Activated T-helper 1 cell treated with anti-CD3 and anti-CD28 coated beads, Interleukin-12 subunit alpha, Interleukin-12 subunit beta, Interleukin-2, Interleukin-4 antibody, amounts not matched to agents 30 ng/mL and 10 ng/mL and 1 ng/mL, durations not matched to agents 14 hours and 24 hours and 36 hours (primary cell): ENCODE measurements at regions of chr14 and their contacts with region 1.

Region 1: DNA sequence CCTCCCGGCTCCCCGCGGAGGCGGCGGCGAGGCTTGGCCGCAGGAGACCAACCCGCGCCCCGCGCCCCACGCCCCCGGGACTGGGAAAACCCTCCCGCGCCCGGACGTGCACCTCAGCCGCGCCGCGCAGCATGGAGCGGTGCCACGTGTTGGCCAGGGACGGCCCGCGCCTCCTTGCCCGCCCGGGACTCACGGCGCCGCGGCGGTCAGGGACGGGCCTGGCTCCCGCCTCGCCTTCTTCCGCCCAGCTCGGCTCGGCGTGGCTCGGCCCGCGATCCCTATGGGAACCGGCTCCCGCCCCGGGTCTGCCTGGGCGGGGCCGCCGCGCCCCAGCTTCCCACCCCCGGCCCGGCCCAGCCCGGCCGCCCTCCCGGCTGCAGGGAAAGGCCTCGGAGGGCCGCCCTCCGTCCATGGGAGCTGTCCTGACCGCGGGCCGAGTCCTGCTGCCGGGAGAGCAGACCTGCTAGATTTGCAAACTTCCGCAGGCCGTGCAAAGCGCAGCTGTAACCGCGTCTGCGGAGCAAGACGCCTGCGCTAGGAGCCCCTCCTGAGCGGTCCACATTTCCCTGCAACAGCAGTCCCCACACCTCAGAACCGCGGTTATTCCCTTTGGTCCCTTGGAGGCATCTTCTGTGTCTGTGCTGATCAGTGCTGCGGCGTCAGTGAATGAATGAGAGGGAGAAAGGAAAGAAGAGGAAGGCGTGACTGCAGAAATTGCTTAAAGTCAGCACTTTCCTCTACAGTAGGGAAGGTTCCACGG is at the start of gene CDKL1:
- DNase-seq: peak; percentile 22
- H3K4me3 Mint-ChIP-seq: peak within 1 kb of the TSS; percentile 85
- H3K27ac Mint-ChIP-seq: peak within 1 kb of the TSS; percentile 79
- H3K4me1 Mint-ChIP-seq: peaks cover 14% of the 10 kb centered on the region
- H3K27me3 Mint-ChIP-seq: peaks cover 25% of the 10 kb centered on the region
- total RNA-seq, gene CDKL1: 2.4 and 2.5 TPM in 2 replicates

Region 2: GRCh38 chr14:50363714-50364111 is 33.1 kb before region 1 on chr14:
- intact Hi-C with region 1: loop called (anchors 2 kb)
- DNase-seq: peak; percentile 46
- H3K4me3 Mint-ChIP-seq: peak overlapping the region; percentile 84
- H3K27ac Mint-ChIP-seq: peak overlapping the region; percentile 94
- H3K4me1 Mint-ChIP-seq: peaks cover 27% of the 10 kb centered on the region
- H3K27me3 Mint-ChIP-seq: no peaks in the 10 kb centered on the region

Region 3: GRCh38 chr14:50377550-50378085 is 19.2 kb before region 1 on chr14:
- intact Hi-C with region 1: no loop called
- DNase-seq: no peak
- H3K4me3 Mint-ChIP-seq: no peak overlapping the region
- H3K27ac Mint-ChIP-seq: no peak overlapping the region
- H3K4me1 Mint-ChIP-seq: no peaks in the 10 kb centered on the region
- H3K27me3 Mint-ChIP-seq: peaks cover 2% of the 10 kb centered on the region

Region 4: DNA sequence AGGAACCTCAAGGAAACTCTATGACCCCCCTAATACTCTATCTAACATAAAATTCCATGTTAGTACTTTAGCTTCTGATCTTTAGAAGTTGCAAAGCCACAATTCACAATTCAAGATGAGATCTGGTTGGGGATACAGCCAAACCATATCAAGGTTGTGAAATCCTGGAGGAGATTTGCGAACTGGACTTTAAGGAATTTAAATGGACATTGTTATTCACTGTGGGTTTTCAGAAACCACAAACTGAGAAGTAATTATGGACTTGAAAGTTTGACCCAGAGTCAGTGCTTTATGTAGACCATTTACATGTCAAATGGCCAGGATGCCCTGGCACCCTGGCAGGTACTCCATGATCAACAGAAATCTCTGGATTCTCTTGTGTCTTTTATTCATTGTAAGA is 14.1 kb after region 1 on chr14:
- intact Hi-C with region 1: loop called (anchors 1 kb)
- DNase-seq: no peak
- H3K4me3 Mint-ChIP-seq: no peak overlapping the region
- H3K27ac Mint-ChIP-seq: no peak overlapping the region
- H3K4me1 Mint-ChIP-seq: no peaks in the 10 kb centered on the region
- H3K27me3 Mint-ChIP-seq: peaks cover 2% of the 10 kb centered on the region